ENCODE measurements at regions of chr15 and their contacts with region 1.

Region 1: DNA sequence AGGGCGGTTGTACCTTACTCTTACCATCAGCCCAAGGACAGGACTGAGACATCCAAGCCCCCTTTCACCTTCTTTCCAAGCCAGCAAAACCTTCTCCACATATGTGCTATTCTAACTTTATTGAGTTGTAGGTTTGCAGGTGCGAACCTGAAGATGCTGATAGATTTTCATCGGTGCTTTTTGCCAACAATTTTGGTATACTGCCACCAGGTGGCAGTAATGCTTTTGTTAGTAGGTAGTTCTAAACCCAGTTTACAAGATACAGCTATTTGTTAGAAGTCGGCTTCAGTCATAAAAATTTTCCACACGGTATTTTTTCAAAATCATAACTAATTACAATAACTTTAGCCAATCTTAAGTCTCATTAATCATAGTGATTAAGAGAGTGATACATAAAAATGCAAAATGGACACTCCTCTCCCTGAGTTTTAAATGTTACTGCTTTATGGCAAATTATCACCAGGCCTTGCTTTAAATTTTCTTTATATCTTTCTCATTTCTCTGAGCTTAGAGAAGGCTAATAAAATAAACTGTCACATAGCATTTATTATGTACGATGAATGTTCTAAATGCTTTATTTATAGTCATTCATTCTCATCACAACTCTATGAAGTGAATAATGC is 636 bp downstream of the TBC1D21 start:
- DNase-seq: peak; percentile 42 to 68 (median 57)
- ATAC-seq: 0 out of 3 replicates have a peak, but pooled peaks have one; percentile 44
- H3K4me3 ChIP-seq: no peak overlapping the region
- H3K27ac ChIP-seq: no peak overlapping the region
- H3K4me1 ChIP-seq: peaks cover 4 to 7% of the 10 kb centered on the region in 2 experiments; a peak in 3 of 5 replicates
- H3K27me3 ChIP-seq: peaks cover 2 to 7% of the 10 kb centered on the region in 2 experiments; a peak in 3 of 5 replicates
- CTCF ChIP-seq: peak; percentile 61 to 72 (median 62)
- EP300 ChIP-seq: no peak
- POLR2A ChIP-seq: no peak
- RAD21 ChIP-seq: peak; percentile 44 to 58

Region 2: DNA sequence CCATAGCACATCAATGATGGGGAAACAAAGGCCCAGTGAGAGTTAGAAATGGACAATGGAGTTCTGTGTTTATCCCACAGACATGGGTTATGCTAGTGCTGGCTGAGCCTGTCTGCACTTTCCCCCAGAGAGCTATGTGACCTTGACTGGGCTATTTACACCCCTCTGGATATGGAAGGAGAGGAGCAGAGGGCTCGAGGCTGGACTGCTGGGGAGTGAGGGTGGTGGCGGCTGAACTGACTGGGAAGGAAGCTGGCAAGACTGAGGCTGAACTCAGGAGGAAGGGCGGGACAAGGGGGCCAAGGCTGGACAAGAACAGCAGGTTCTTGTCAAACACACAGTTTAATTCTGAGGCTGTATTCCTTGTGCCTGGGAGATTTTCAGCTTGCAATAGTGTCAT is 110.1 kb before region 1 on chr15:
- CTCF ChIA-PET with region 1: no interaction called
- POLR2A ChIA-PET with region 1: no interaction called
- in situ Hi-C with region 1: no loop called
- intact Hi-C with region 1: no loop called
- DNase-seq: no peak
- ATAC-seq: no peak
- H3K4me3 ChIP-seq: no peak overlapping the region
- H3K27ac ChIP-seq: no peak overlapping the region
- H3K4me1 ChIP-seq: no peaks in the 10 kb centered on the region; a peak in 1 of 5 replicates
- H3K27me3 ChIP-seq: peaks cover 20 to 46% of the 10 kb centered on the region in 2 experiments; a peak in 4 of 5 replicates
- CTCF ChIP-seq: no peak
- EP300 ChIP-seq: no peak
- POLR2A ChIP-seq: no peak
- RAD21 ChIP-seq: no peak

Region 3: DNA sequence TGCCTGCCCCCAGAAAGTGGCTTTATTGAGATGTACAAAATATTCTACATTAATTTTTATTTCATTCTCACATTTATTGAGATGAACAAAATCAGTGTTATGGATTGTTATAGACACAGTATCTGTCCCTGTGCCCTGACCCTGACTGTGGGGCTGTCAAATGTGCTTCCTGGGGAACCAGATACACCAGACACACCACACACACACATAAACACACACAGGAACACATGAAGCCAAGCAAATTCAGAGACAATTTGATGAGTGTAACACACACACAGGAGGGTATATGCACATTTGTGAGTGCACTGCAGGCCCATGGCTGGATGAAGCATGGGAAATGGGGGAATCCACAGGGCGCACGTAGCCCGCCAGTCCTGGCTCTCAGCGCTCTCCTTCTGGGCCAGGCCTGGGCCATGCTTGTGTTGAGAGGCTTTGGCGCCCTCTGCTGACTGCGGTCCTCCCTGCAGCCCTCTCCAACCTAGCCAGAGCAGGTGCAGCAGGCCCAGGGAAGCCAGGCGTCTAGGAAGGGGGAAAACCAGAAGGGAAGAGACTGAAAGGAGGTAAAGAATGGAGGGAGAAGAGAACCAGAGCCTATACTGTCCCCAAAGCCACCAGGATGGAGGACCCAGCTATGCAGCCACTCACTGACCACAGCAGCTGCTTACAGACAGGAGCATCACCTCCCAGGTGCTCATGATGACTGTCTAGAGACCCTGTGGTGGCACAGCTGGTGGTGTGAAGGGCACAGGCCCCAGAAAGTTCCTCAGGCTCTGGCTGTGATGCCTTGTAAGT is 34.2 kb after region 1 on chr15:
- CTCF ChIA-PET with region 1: interaction called, 9 read pairs
- POLR2A ChIA-PET with region 1: interaction called, 3 read pairs
- in situ Hi-C with region 1: no loop called
- intact Hi-C with region 1: loop called (anchors 1 kb)
- DNase-seq: peak; percentile 67 to 75 (median 70)
- ATAC-seq: peak; percentile 100
- H3K4me3 ChIP-seq: no peak overlapping the region
- H3K27ac ChIP-seq: no peak overlapping the region
- H3K4me1 ChIP-seq: no peaks in the 10 kb centered on the region
- H3K27me3 ChIP-seq: peaks cover 0 to 37% of the 10 kb centered on the region in 2 experiments; a peak in 3 of 5 replicates
- CTCF ChIP-seq: peak; percentile 87 to 90 (median 88)
- EP300 ChIP-seq: no peak
- POLR2A ChIP-seq: no peak
- RAD21 ChIP-seq: peak; percentile 57 to 89

Region 4: GRCh38 chr15:73982222-73982962 is 108.4 kb after region 1 on chr15:
- CTCF ChIA-PET with region 1: no interaction called
- POLR2A ChIA-PET with region 1: no interaction called
- in situ Hi-C with region 1: no loop called
- intact Hi-C with region 1: no loop called
- DNase-seq: no peak
- ATAC-seq: peak; percentile 68
- H3K4me3 ChIP-seq: no peak overlapping the region
- H3K27ac ChIP-seq: no peak overlapping the region
- H3K4me1 ChIP-seq: peaks cover 4 to 21% of the 10 kb centered on the region in 2 experiments; a peak in 4 of 5 replicates
- H3K27me3 ChIP-seq: no peaks in the 10 kb centered on the region; a peak in 1 of 5 replicates
- CTCF ChIP-seq: no peak
- EP300 ChIP-seq: no peak
- POLR2A ChIP-seq: no peak
- RAD21 ChIP-seq: no peak